ENCODE measurements at regions of chr13 and their contacts with region 1.

Region 1: GRCh38 chr13:71218960-71219359 is 648.0 kb downstream of the DACH1 start:
- DNase-seq: no peak
- ATAC-seq: peak in 1 of 4 donors; percentile 73
- H3K4me3 ChIP-seq: no peak overlapping the region
- H3K27ac ChIP-seq: no peak overlapping the region
- H3K4me1 ChIP-seq: peaks cover 0 to 6% (median 0%) of the 10 kb centered on the region in 12 donors
- H3K27me3 ChIP-seq: no peaks in the 10 kb centered on the region
- CTCF ChIP-seq: peak in 3 of 12 donors; percentile 15 to 25 (median 23)
- POLR2A ChIP-seq: no peak

Region 2: DNA sequence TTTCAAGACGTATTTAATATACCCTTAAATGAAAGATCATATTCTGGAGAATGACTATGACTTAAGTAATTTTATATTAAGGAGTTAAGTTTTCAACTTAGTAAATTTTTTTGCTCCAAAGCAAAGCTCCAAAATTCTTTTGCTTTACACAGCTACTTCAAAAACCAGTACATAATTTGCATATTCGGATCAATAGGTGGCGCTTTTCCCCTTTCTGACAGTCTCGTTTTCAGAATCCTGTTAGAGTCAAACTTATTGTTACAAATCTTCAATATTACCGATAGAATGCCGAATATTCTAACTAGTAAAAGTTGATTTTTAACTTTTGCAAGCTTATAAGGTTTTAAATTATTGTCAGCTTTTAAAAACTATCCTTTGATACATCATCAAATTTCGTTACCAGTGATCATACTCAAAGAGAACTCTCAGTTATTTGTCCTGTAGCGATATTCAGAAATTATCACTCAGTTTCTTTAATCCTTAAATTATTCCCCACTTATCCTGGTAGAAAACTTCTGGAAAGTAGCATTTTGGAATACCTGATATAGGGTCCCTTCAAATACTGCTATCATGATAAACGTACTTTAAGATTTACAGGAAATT is 258.0 kb before region 1 on chr13:
- intact Hi-C with region 1: loop called in 1 of 10 experiments (anchors 5 kb)
- DNase-seq: no peak
- ATAC-seq: no peak
- H3K4me3 ChIP-seq: no peak overlapping the region
- H3K27ac ChIP-seq: no peak overlapping the region
- H3K4me1 ChIP-seq: no peaks in the 10 kb centered on the region
- H3K27me3 ChIP-seq: no peaks in the 10 kb centered on the region
- CTCF ChIP-seq: peak; percentile 31 to 72 (median 54)
- POLR2A ChIP-seq: no peak

Measured in heart left ventricle (tissue), 16 donors.